AG04449 (cell line): ENCODE measurements at regions of chr20 and their contacts with region 1.

Region 1: GRCh38 chr20:38645980-38646858 is 44.6 kb downstream of the ARHGAP40 start:
- DNase-seq: no peak
- H3K4me3 ChIP-seq: peak overlapping the region; percentile 32; the same call in 1 of the 2 replicates
- CTCF ChIP-seq: peak; percentile 99

Region 2: GRCh38 chr20:38633577-38634093 is 12.6 kb before region 1 on chr20:
- CTCF ChIA-PET with region 1: interaction called, 11 read pairs
- POLR2A ChIA-PET with region 1: no interaction called
- DNase-seq: no peak
- H3K4me3 ChIP-seq: no peak overlapping the region
- CTCF ChIP-seq: peak; percentile 88

Region 3: GRCh38 chr20:38658879-38659596 is 12.8 kb after region 1 on chr20:
- CTCF ChIA-PET with region 1: interaction called, 41 read pairs
- POLR2A ChIA-PET with region 1: no interaction called
- DNase-seq: no peak
- H3K4me3 ChIP-seq: no peak overlapping the region
- CTCF ChIP-seq: peak; percentile 51

Region 4: DNA sequence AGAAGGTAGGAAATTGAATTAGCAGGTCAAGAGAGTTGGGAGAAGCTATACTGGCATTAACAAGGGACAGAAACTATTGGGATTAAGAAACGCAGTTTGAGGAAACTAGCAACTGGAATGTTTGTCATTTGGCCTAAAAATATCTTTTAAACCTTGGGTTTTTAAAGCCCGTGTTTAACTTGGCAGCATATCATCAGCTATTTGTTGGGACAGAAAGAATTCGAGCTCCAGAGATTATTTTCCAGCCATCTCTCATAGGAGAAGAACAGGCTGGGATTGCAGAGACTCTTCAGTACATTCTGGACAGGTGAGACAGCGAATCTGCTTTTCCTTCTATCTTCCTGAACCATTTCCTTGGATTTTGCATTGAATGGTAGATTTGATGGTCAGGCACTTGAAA is 119.9 kb after region 1 on chr20:
- CTCF ChIA-PET with region 1: no interaction called
- POLR2A ChIA-PET with region 1: no interaction called
- DNase-seq: no peak
- H3K4me3 ChIP-seq: no peak overlapping the region
- CTCF ChIP-seq: no peak